ENCODE measurements at regions of chr15 and their contacts with region 1.

Region 1: GRCh38 chr15:33179874-33180273 is 14.6 kb downstream of the FMN1 start:
- DNase-seq: no peak
- H3K4me3 Mint-ChIP-seq: no peak overlapping the region
- H3K27ac Mint-ChIP-seq: no peak overlapping the region
- H3K4me1 Mint-ChIP-seq: no peaks in the 10 kb centered on the region
- H3K27me3 Mint-ChIP-seq: no peaks in the 10 kb centered on the region

Region 2: DNA sequence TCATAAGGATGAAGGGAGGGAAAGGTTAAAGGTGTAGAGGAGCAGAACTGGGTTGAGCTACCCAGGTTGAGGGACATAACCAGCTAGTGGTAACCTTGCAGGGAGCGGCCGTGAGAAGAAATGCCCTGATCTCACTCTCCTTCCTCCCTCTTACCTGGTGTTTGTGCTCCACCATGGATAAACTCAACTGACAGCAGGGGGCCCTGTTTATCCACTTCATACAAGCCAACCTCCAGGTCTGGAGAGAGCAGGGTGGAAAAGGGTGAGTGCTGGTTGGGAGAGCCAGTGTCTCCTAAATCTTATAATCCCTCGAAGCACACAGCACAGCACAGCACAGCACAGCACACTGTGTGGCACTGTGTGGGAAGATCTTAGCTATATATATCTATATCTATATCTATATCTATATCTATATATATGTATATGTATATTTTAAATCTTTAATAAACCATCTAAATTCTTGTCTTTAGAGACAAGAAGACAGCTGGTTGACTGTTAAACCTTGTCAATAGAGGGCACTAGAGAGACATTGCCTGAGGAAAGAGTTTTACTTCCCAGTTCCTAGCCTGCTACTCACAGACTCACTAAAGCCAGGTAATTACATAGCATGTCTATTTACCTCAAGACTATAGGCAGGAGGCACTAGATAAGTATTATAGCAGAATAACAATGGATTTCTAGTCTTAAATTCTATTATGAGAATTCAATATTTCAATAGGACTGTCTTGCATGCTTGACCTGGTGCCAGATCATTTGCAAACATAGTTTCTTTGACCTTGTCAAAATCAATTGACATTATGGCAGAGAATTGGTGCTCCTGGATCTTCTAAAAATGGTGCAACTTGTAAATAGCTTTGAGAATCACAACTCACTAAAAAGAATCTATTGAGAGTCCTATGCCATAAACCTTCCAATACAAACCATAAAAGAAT is 36.3 kb after region 1 on chr15:
- intact Hi-C with region 1: loop called (anchors 5 kb)
- DNase-seq: no peak
- H3K4me3 Mint-ChIP-seq: no peak overlapping the region
- H3K27ac Mint-ChIP-seq: no peak overlapping the region
- H3K4me1 Mint-ChIP-seq: no peaks in the 10 kb centered on the region
- H3K27me3 Mint-ChIP-seq: peaks cover 7% of the 10 kb centered on the region